WTC11 (cell line): ENCODE measurements at regions of chr9 and their contacts with region 1.

Region 1: GRCh38 chr9:121609845-121610570 is 41.4 kb upstream of the DAB2IP start:
- DNase-seq: no peak
- ATAC-seq: no peak
- H3K4me3 Mint-ChIP-seq: no peak overlapping the region
- H3K27ac Mint-ChIP-seq: no peak overlapping the region
- H3K4me1 Mint-ChIP-seq: peaks cover 36% of the 10 kb centered on the region
- H3K27me3 Mint-ChIP-seq: no peaks in the 10 kb centered on the region
- CTCF ChIP-seq: no peak

Region 2: DNA sequence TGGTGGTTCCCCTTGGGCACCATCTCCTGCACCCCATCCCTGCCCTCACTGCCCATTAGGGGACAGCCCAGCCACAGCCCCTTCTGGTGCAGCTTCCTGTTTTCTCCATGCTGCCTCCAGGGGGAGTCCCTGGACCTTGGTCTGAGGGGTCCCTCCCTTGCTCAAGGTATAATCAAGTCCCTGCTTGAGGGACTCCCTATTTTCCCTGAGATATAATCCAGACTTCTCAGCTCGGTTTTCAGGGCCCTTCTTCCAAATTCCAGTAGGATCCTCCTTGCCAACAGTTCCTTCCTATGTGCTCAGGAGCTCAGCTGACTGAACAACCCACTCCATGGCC is 11.1 kb after region 1 on chr9:
- CTCF ChIA-PET with region 1: interaction called, 49 read pairs
- POLR2A ChIA-PET with region 1: no interaction called
- DNase-seq: peak; percentile 74
- ATAC-seq: peak; percentile 97
- H3K4me3 Mint-ChIP-seq: no peak overlapping the region
- H3K27ac Mint-ChIP-seq: peak overlapping the region; percentile 32
- H3K4me1 Mint-ChIP-seq: peaks cover 20% of the 10 kb centered on the region
- H3K27me3 Mint-ChIP-seq: no peaks in the 10 kb centered on the region
- CTCF ChIP-seq: no peak

Region 3: DNA sequence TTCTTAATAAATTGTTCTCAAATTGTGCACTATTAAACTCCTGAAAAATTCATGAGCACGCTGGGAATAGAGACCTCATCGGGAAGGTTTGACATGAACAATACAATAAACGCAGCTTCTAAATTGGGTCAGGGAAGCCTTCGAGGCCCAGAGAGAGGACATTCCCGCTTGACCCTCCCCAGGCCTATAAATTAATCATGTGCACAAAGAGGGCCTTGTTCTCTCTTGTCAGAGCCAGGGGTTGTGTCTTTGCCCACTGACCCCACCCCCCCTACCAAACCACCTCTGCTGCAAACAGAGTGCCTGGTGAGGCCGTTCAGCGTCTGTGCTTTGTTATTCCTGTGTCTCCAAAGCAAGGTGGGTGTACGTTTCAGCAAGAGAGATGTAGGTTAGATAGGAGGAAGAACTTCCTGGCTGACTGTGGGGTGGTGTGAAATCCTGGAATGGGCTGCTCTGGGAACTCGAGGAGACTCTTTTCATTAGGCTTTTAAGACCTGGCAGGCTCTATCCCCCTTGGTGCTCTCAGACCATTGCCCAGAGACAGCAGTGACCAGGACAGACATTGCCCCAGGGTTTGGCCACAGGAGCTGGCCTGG is 23.2 kb after region 1 on chr9:
- CTCF ChIA-PET with region 1: no interaction called
- POLR2A ChIA-PET with region 1: no interaction called
- DNase-seq: no peak
- ATAC-seq: no peak
- H3K4me3 Mint-ChIP-seq: no peak overlapping the region
- H3K27ac Mint-ChIP-seq: no peak overlapping the region
- H3K4me1 Mint-ChIP-seq: peaks cover 38% of the 10 kb centered on the region
- H3K27me3 Mint-ChIP-seq: no peaks in the 10 kb centered on the region
- CTCF ChIP-seq: no peak